Dorsolateral prefrontal cortex (tissue), 120 donors: ENCODE measurements at regions of chr4 and their contacts with region 1.

Region 1: DNA sequence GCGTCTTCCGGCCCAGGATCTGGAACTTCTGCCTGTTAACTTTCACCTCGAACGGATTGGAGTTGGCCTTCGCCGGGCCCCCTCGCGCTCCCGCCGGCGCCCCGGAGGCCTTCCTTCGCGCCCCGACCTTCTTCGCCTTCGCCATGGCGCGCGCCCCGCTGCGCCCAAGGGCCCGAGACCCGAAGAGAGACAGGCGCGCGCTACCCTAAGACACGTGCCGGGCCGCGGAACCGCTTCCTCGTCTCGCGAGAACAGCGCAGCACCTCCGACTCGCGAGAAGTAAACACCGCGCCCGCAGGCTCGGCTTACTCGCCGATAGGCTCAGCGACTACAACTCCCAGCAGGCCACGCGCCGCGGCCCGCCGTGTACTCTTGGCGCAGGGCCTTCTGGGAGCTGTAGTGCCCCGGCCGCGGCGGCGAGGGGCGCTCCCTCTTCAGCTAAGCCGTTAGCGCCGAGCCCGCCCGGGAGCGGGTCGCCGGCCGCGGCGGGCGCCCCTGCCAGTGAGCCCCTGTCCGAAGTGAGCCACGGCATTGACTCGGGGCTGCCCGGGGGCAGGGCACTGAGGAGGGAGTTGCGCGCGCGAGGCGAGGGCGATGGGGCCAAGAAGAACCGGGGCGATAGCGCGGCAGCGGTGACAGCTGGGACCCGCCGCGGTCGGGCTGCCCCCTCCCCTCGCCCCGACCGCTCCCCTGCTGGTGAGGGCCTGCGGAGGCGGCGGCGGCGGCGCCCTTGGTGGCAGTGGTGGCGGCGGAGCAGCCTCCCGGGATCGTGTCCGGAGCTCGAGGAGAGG is at the starts of genes GRK4 and NOP14:
- DNase-seq: peak; percentile 96 to 99 (median 98)
- H3K4me3 ChIP-seq: peak within 1 kb of the TSS; percentile 54 to 100 (median 95)
- H3K27ac ChIP-seq: peak within 1 kb of the TSS in 58 of 59 donors; percentile 15 to 93 (median 84)
- H3K27me3 ChIP-seq: no peaks in the 10 kb centered on the region
- CTCF ChIP-seq: peak in 55 of 56 donors; percentile 24 to 77 (median 59)
- total RNA-seq, gene GRK4: 17.9 to 41.6 (median 30.0) TPM
- total RNA-seq, gene NOP14: 9.7 to 21.7 (median 15.1) TPM

Region 2: DNA sequence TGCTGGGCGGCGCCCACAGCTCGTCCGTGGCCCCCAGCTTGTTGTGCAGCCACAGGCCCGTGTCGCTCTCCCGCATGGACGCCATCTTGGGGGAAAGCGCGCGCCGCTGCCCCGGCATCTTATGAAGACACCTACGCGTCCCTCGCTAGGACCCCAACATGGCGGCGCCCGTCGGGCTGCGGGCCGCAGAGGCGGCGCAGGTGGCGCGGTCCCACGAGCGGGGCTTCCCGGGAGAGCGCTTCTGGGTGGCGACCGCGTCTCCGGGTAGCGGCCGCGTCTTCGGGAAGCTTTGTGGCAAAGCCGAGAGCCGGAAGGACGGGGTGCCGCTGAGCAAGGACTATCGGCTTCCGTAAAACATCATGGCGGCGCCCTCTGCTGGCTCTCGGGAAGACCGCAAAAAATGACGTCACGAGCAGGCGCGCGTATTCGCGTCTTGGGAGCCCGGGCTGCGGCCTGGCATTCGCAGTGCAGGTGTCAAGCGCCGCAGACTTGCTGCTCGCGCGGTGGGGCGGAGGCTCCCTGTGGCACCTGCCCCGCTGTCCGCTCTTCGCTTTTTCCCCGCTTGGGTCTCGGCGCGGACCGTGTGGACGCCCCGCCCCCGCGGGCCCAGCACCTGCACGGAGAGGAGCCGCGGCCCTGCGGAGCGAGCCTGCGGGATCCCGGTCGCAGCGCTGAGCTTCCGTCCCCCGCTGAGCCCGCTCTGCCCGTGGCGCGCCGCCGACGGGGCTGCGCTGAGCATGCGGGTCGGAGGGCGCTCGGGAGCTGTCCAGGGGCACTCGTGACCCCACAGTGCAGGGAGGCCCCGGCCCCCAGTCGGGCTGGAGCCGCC is 954.3 kb before region 1 on chr4 and contains the start of gene NELFA:
- intact Hi-C with region 1: loop called in 1 of 2 experiments (anchors 10 kb)
- DNase-seq: peak; percentile 94 to 97 (median 96)
- H3K4me3 ChIP-seq: peak within 1 kb of the TSS; percentile 61 to 99 (median 95)
- H3K27ac ChIP-seq: peak within 1 kb of the TSS; percentile 92 to 100 (median 99)
- H3K27me3 ChIP-seq: no peaks in the 10 kb centered on the region
- CTCF ChIP-seq: peak in 53 of 56 donors; percentile 20 to 89 (median 63)
- total RNA-seq, gene NELFA: 31.6 to 76.1 (median 48.7) TPM

Region 3: DNA sequence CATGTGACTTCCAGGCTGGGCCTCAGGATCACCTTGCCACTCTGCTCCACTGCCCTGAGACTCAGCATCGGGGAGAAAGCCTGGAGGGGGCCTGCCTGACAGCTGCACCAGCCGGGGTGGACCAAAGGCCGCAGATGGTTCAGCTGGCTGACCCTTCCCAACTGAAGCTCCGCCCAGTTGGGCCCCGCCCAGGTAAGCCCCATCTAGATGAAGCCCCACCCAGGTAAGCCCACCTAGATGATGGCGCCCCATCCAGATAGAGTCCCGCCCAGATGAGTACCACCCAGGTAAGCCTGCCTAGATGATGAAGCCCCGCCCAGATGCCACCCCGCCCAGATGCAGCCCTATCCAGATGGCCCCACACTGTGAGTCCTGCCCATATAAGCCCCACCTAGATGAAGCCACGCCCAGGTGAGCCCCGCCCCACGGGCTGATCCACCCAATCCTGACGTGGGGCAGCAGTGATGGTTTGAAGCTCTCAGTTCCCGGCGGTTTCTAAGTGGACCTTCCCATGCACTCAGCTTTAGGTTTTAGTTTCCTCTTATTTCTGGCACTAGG is 554.9 kb before region 1 on chr4:
- intact Hi-C with region 1: no loop called
- DNase-seq: peak in 1 of 10 donors; percentile 43
- H3K4me3 ChIP-seq: no peak overlapping the region
- H3K27ac ChIP-seq: peak overlapping the region in 23 of 59 donors; percentile 13 to 81 (median 52)
- H3K27me3 ChIP-seq: no peaks in the 10 kb centered on the region
- CTCF ChIP-seq: no peak

Region 4: GRCh38 chr4:2418650-2419571 is 544.5 kb before region 1 on chr4 and contains the start of gene CFAP99:
- intact Hi-C with region 1: loop called (anchors 2 to 5 kb)
- DNase-seq: peak; percentile 95 to 99 (median 97)
- H3K4me3 ChIP-seq: peak within 1 kb of the TSS; percentile 54 to 95 (median 77)
- H3K27ac ChIP-seq: peak within 1 kb of the TSS in 48 of 59 donors; percentile 12 to 92 (median 72)
- H3K27me3 ChIP-seq: peaks cover 0 to 4% (median 0%) of the 10 kb centered on the region in 45 donors
- CTCF ChIP-seq: peak in 44 of 56 donors; percentile 5 to 64 (median 39)
- total RNA-seq, gene CFAP99: 0.28 to 3.7 (median 1.4) TPM

Region 5: DNA sequence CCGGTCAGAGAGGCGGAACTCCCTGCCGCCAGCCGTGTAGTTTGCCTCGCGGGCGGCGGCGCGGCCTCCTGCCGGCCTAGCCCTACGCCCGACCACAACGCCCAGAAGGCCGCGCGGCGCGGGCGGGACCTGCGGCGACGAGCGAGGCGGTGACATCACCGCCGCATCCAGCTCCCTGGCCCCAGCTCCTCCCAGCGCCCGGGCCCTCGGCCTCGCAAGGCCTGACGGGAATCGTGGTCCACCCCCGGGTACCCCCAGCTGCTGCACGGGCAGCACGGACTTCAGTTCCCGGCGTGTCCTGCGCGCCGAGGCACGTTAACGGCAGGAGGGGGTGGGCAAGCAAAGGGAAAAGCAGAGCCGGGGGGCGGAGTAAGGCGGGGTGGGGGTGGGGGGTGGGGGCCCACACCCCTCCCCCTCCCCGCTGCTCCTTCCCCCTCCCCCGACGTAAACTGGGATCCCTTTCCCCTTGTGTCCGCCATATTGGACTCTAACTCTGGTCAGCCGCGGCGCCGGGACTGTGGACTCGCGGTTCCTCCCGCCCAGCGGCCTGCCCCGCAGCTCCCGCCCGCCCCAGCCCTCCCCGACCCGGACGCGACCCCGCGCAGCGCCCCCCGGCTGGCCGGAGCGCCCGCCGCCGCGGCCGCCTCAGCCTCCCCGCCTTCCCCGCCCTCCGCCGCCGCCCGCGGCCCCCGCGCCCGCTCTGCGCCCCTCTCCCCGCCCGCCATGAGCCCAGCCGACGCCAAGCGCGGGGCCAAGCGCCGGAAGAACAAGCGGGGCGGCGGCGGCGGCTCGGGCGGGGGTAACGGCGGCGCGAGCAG is 427.0 kb before region 1 on chr4 and contains the start of gene FAM193A:
- intact Hi-C with region 1: loop called in 1 of 2 experiments (anchors 10 kb)
- DNase-seq: peak; percentile 98 to 100 (median 99)
- H3K4me3 ChIP-seq: peak within 1 kb of the TSS; percentile 74 to 97 (median 91)
- H3K27ac ChIP-seq: peak within 1 kb of the TSS; percentile 37 to 99 (median 94)
- H3K27me3 ChIP-seq: no peaks in the 10 kb centered on the region
- CTCF ChIP-seq: peak in 28 of 56 donors; percentile 5 to 47 (median 28)
- total RNA-seq, gene FAM193A: 30.7 to 56.7 (median 40.1) TPM

Region 6: GRCh38 chr4:2843263-2843940 is 120.0 kb before region 1 on chr4 and contains the start of gene ADD1:
- intact Hi-C with region 1: loop called in 1 of 2 experiments (anchors 5 kb)
- DNase-seq: peak; percentile 86 to 98 (median 90)
- H3K4me3 ChIP-seq: peak within 1 kb of the TSS; percentile 56 to 98 (median 88)
- H3K27ac ChIP-seq: peak within 1 kb of the TSS; percentile 55 to 99 (median 97)
- H3K27me3 ChIP-seq: no peaks in the 10 kb centered on the region
- CTCF ChIP-seq: peak in 8 of 56 donors; percentile 4 to 37 (median 10)
- total RNA-seq, gene ADD1: 448 to 781 (median 536) TPM

Region 7: DNA sequence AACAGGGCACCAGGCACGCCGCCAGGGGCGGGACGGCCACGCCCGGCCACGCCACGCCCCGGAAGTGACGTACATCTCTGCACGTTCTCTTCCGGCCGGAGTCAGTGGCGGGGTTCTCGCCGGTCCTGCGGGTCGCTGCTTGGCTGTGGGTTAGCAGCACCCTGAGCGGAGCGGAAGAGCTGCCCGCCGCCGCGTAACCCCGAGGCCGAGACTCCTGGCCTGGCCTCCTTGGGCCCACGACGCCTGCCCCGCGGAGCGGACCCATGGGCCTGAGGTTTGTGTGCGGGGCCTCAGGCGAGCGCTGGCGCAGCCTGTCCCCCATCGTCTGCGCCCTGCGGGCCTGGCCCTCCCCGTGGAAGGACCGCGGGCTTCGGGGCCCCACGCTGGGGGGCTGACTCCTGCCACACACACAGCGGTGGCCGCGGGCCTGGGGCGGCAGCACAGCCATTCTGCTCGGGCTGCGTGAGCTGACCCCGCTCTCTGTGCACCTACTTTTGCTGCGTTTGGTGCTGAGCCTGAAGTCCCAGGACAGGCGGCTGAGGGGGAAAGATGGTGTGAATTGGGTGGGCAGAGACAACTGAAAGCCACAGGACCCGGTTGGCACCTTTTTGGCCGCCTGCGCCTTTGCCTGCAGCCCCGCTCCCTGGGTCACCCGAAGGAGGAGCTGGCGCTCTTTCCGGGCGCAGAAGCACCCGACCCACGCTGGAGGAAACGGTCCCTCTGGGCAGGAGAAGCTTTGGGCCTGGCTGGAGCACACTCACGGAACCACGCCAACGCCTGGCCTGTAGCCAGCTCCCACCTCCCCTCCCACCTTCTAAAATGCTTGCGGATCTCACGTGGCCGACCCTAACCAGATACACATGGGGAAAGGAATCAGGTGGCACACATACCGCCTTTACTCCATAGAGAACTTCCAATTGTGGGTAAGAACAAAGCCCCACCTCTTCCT is 28.3 kb before region 1 on chr4:
- intact Hi-C with region 1: loop called (anchors 2 kb)
- DNase-seq: peak; percentile 82 to 94 (median 88)
- H3K4me3 ChIP-seq: peak overlapping the region; percentile 66 to 100 (median 95)
- H3K27ac ChIP-seq: peak overlapping the region in 57 of 59 donors; percentile 42 to 95 (median 83)
- H3K27me3 ChIP-seq: no peaks in the 10 kb centered on the region
- CTCF ChIP-seq: peak in 11 of 56 donors; percentile 3 to 28 (median 16)

Region 8: GRCh38 chr4:3074078-3074795 is 110.9 kb after region 1 on chr4 and contains the starts of genes HTT and HTT-AS:
- intact Hi-C with region 1: loop called in 1 of 2 experiments (anchors 5 kb)
- DNase-seq: peak; percentile 91 to 98 (median 96)
- H3K4me3 ChIP-seq: peak within 1 kb of the TSS; percentile 66 to 95 (median 88)
- H3K27ac ChIP-seq: peak within 1 kb of the TSS in 56 of 59 donors; percentile 31 to 94 (median 84)
- H3K27me3 ChIP-seq: no peaks in the 10 kb centered on the region
- CTCF ChIP-seq: peak in 13 of 56 donors; percentile 7 to 37 (median 19)
- total RNA-seq, gene HTT: 81.8 to 165 (median 124) TPM
- total RNA-seq, gene HTT-AS: 0.79 to 3.0 (median 1.3) TPM in 11 of 120 experiments, not detected in the others